WTC11 (cell line): ENCODE measurements at regions of chr16 and their contacts with region 1.

Region 1: DNA sequence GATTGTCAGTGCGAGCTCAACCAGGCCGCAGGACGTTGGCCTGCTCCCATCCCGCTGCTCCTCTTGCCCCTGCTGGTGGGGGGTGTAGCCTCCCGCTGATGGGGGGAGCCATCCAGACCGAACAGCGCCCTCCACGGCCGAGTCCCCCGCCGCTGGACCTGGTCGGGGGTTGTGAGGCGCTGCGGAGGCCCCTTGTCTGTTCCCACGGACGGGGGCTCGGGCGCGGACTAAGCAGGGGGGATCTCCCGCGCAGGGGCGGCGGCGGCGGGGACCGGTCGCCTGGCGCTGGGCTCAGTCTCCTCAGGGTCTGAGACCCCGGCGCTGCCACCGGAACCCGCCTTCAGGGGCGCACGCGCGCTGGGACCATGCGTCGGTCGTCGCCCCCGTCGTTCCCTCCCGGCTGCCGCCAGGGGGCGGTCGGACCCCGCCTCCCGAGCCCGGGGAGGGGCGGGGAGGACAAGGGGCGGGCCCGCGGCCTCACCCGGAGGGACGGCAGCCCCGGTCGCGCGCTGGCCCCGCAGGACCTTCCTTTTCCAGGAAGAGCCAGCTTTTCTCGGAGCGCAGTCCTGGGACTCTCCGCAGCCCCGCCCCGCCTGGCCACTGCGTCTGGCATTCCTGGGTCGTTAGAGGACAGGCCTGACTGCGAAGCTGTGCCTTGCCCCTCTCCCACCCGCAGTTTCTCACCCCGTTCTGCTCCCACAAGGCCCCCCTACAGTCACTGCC is 6.3 kb upstream of the IL32 start:
- DNase-seq: peak; percentile 94
- ATAC-seq: peak; percentile 79
- H3K4me3 Mint-ChIP-seq: peak overlapping the region; percentile 76
- H3K27ac Mint-ChIP-seq: peak overlapping the region; percentile 79; the same call in 1 of the 2 replicates
- H3K4me1 Mint-ChIP-seq: peaks cover 28% of the 10 kb centered on the region
- H3K27me3 Mint-ChIP-seq: peaks cover 3% of the 10 kb centered on the region; the same call in 1 of the 2 replicates
- CTCF ChIP-seq: peak; percentile 92

Region 2: DNA sequence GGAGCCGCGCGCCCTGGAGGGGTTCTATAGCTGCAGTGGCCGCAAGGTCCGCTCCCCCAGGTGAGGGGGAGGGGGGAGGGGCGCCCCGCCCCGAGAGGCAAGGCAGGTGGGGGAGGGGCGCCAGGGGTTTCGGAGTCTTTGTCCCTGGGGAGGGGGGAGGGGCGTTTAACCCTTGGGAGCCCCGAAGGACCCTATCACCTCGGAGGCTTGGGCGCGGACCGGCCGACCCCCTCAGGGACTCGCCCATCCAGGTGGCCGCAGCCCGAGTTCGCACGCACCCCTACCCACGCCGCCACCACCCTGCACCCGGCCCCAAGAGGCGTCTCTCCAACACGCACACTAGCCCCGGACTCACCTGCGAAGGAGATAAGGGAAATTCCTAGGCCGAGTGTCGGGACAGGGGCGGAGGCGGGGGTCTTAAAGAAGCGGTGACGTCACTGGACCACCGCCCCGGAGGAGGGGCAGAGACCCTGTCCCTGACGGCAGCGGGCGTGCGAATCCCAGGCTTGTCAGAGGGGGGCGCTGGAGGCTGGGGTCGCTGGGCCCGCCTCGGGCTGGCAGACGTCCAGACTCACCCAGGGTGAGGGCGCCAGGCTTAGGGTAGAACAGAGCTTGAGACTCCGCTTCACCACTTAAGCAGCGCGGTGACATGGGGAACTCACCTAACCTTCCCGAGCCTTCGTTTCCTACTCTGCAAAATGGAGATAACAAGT is 41.2 kb before region 1 on chr16 and contains the start of gene CLDN6:
- CTCF ChIA-PET with region 1: interaction called, 16 read pairs
- POLR2A ChIA-PET with region 1: interaction called, 8 read pairs
- DNase-seq: peak; percentile 99
- ATAC-seq: peak; percentile 49
- H3K4me3 Mint-ChIP-seq: peak within 1 kb of the TSS; percentile 93
- H3K27ac Mint-ChIP-seq: peak within 1 kb of the TSS; percentile 96
- H3K4me1 Mint-ChIP-seq: peaks cover 69% of the 10 kb centered on the region
- H3K27me3 Mint-ChIP-seq: peaks cover 5% of the 10 kb centered on the region; the same call in 1 of the 2 replicates
- CTCF ChIP-seq: peak; percentile 81
- total RNA-seq, gene CLDN6: 746 to 778 TPM (median 775 TPM) in 3 replicates

Region 3: GRCh38 chr16:3038256-3038655 is 20.9 kb before region 1 on chr16:
- CTCF ChIA-PET with region 1: interaction called, 37 read pairs
- POLR2A ChIA-PET with region 1: no interaction called
- DNase-seq: peak; percentile 71
- ATAC-seq: peak; percentile 31
- H3K4me3 Mint-ChIP-seq: no peak overlapping the region
- H3K27ac Mint-ChIP-seq: 0 out of 2 replicates have a peak overlapping the region, but pooled peaks have one; percentile 53
- H3K4me1 Mint-ChIP-seq: peaks cover 23% of the 10 kb centered on the region
- H3K27me3 Mint-ChIP-seq: peaks cover 3% of the 10 kb centered on the region; the same call in 1 of the 2 replicates
- CTCF ChIP-seq: no peak

Region 4: GRCh38 chr16:3087243-3088235 is 28.4 kb after region 1 on chr16:
- CTCF ChIA-PET with region 1: interaction called, 52 read pairs
- POLR2A ChIA-PET with region 1: interaction called, 5 read pairs
- DNase-seq: peak; percentile 50
- ATAC-seq: peak; percentile 49
- H3K4me3 Mint-ChIP-seq: no peak overlapping the region
- H3K27ac Mint-ChIP-seq: peak overlapping the region; percentile 84
- H3K4me1 Mint-ChIP-seq: peaks cover 21% of the 10 kb centered on the region
- H3K27me3 Mint-ChIP-seq: no peaks in the 10 kb centered on the region
- CTCF ChIP-seq: no peak

Region 5: GRCh38 chr16:3106205-3106928 is 47.2 kb after region 1 on chr16:
- CTCF ChIA-PET with region 1: interaction called, 38 read pairs
- POLR2A ChIA-PET with region 1: no interaction called
- DNase-seq: peak; percentile 95
- ATAC-seq: peak; percentile 76
- H3K4me3 Mint-ChIP-seq: peak overlapping the region; percentile 68
- H3K27ac Mint-ChIP-seq: peak overlapping the region; percentile 89
- H3K4me1 Mint-ChIP-seq: peaks cover 37% of the 10 kb centered on the region
- H3K27me3 Mint-ChIP-seq: no peaks in the 10 kb centered on the region; the same call in 1 of the 2 replicates
- CTCF ChIP-seq: no peak

Region 6: GRCh38 chr16:3129137-3130131 is 70.3 kb after region 1 on chr16:
- CTCF ChIA-PET with region 1: interaction called, 79 read pairs
- POLR2A ChIA-PET with region 1: interaction called, 6 read pairs
- DNase-seq: peak; percentile 69
- ATAC-seq: peak; percentile 58
- H3K4me3 Mint-ChIP-seq: peak overlapping the region; percentile 45
- H3K27ac Mint-ChIP-seq: peak overlapping the region; percentile 95
- H3K4me1 Mint-ChIP-seq: peaks cover 42% of the 10 kb centered on the region
- H3K27me3 Mint-ChIP-seq: no peaks in the 10 kb centered on the region
- CTCF ChIP-seq: peak; percentile 87

Region 7: GRCh38 chr16:3150346-3151218 is 91.4 kb after region 1 on chr16:
- CTCF ChIA-PET with region 1: interaction called, 25 read pairs
- POLR2A ChIA-PET with region 1: interaction called, 6 read pairs
- DNase-seq: peak; percentile 98
- ATAC-seq: peak; percentile 78
- H3K4me3 Mint-ChIP-seq: peak overlapping the region; percentile 93
- H3K27ac Mint-ChIP-seq: peak overlapping the region; percentile 96
- H3K4me1 Mint-ChIP-seq: peaks cover 7% of the 10 kb centered on the region
- H3K27me3 Mint-ChIP-seq: peaks cover 37% of the 10 kb centered on the region
- CTCF ChIP-seq: no peak

Region 8: GRCh38 chr16:3188925-3189825 is 130.0 kb after region 1 on chr16:
- CTCF ChIA-PET with region 1: no interaction called
- POLR2A ChIA-PET with region 1: no interaction called
- DNase-seq: peak; percentile 80
- ATAC-seq: peak; percentile 35
- H3K4me3 Mint-ChIP-seq: peak overlapping the region; percentile 97
- H3K27ac Mint-ChIP-seq: no peak overlapping the region; the same call in 1 of the 2 replicates
- H3K4me1 Mint-ChIP-seq: peaks cover 18% of the 10 kb centered on the region
- H3K27me3 Mint-ChIP-seq: peaks cover 61% of the 10 kb centered on the region
- CTCF ChIP-seq: no peak

Region 9: GRCh38 chr16:3223913-3224515 is 164.9 kb after region 1 on chr16:
- CTCF ChIA-PET with region 1: no interaction called
- POLR2A ChIA-PET with region 1: no interaction called
- DNase-seq: no peak
- ATAC-seq: no peak
- H3K4me3 Mint-ChIP-seq: no peak overlapping the region
- H3K27ac Mint-ChIP-seq: no peak overlapping the region
- H3K4me1 Mint-ChIP-seq: no peaks in the 10 kb centered on the region
- H3K27me3 Mint-ChIP-seq: peaks cover 6% of the 10 kb centered on the region; the same call in 1 of the 2 replicates
- CTCF ChIP-seq: no peak